Calu3 (cell line): ENCODE measurements at regions of chr13 and their contacts with region 1.

Region 1: GRCh38 chr13:53079691-53080090 is 51.1 kb downstream of the OLFM4 start:
- DNase-seq: no peak
- H3K4me3 Mint-ChIP-seq: no peak overlapping the region
- H3K27ac Mint-ChIP-seq: no peak overlapping the region
- H3K4me1 Mint-ChIP-seq: no peaks in the 10 kb centered on the region
- H3K27me3 Mint-ChIP-seq: no peaks in the 10 kb centered on the region
- CTCF ChIP-seq: no peak

Region 2: DNA sequence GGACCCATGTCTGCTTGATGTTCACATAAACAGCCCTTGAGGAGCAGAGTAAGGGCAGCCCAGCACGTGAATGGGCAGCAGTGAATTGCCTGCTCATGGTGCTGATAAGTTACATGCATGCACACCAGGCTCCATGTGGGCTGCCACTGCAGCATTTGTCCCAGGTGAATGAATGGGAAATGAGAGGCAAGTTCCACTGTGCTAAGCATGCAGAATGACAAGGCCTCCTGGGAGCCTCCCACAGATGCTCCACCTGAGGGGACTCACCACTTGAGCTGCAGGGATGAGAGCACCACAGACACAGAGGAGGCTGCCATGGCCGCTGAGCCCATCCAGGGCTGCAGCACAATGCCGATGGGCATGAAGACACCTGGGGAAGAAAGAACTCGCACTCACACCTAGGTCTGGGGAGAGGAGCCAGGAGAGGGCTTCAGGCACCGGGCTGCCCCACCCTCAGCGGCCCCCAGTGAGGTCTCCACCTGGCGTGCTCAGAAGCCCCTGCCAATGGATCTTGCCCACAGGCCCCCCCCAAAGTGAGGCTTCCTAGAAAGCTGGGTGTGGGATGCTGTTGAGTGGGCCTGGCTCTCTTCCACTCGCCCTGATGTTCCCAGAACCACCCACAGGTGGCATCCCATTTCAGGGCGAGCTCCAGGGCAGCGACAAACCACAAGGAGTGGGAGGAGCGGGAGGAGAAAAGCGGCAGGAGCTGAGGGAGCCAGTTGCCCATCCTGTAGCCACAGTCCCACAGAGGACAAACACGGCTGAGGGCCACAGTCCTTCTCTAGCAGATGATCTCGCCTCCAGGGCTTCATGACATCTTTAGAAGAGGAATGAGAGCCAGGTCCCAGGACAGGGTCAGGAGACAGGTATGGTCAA is 1144.1 kb before region 1 on chr13:
- CTCF ChIA-PET with region 1: no interaction called
- intact Hi-C with region 1: no loop called
- DNase-seq: peak; percentile 21
- H3K4me3 Mint-ChIP-seq: no peak overlapping the region
- H3K27ac Mint-ChIP-seq: no peak overlapping the region
- H3K4me1 Mint-ChIP-seq: no peaks in the 10 kb centered on the region
- H3K27me3 Mint-ChIP-seq: no peaks in the 10 kb centered on the region
- CTCF ChIP-seq: no peak

Region 3: DNA sequence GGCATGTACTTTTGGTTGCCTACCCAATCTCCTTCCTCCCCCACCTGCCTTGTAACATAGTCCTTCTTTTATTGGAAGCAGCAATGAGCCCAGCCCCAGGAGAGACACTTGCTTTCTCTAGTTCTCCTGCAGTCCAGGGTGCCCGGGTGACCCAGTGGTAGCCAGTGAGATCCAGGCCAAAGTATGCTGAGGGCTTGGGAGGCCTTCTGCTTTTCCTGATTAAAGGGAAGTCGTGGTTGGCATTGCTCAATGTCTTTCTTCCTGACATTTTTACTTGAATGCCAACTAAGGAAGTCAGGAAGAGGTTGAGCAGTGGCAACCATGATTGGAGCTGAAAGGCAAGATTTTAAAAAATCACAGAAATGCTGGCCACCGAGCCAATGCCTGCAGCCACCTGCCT is 365.8 kb before region 1 on chr13:
- CTCF ChIA-PET with region 1: no interaction called
- intact Hi-C with region 1: loop called (anchors 5 kb)
- DNase-seq: no peak
- H3K4me3 Mint-ChIP-seq: no peak overlapping the region
- H3K27ac Mint-ChIP-seq: no peak overlapping the region
- H3K4me1 Mint-ChIP-seq: no peaks in the 10 kb centered on the region
- H3K27me3 Mint-ChIP-seq: no peaks in the 10 kb centered on the region
- CTCF ChIP-seq: no peak

Region 4: DNA sequence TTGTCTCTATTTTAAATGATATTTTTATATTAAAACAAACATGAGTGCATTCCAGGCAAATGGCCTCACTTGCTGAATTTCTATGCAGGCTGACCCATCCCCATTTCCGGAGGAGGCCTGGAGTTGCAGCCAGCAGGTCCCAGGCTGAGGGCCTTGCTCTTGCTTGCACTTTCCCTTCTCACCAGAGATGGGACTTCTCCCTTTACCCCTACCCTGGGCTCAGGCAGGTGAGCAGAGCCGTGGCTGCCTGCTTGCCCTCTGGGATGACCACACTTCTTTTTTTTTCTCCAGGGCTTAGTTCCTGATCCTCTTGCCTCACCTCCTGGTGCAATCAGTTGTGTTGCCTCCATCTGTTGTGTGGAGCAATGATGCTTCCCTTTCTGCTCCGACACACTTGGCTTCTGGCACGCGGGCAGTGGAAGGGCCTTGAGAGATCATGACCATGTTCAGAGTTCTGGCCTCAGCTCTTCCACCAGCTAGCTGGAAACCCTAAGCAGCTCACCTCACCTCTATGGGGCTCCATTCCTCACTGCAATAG is 62.2 kb before region 1 on chr13:
- CTCF ChIA-PET with region 1: no interaction called
- intact Hi-C with region 1: no loop called
- DNase-seq: no peak
- H3K4me3 Mint-ChIP-seq: no peak overlapping the region
- H3K27ac Mint-ChIP-seq: no peak overlapping the region
- H3K4me1 Mint-ChIP-seq: no peaks in the 10 kb centered on the region
- H3K27me3 Mint-ChIP-seq: no peaks in the 10 kb centered on the region
- CTCF ChIP-seq: no peak

Region 5: GRCh38 chr13:53112525-53112924 is 32.8 kb after region 1 on chr13:
- CTCF ChIA-PET with region 1: no interaction called
- intact Hi-C with region 1: no loop called
- DNase-seq: no peak
- H3K4me3 Mint-ChIP-seq: no peak overlapping the region
- H3K27ac Mint-ChIP-seq: no peak overlapping the region
- H3K4me1 Mint-ChIP-seq: no peaks in the 10 kb centered on the region
- H3K27me3 Mint-ChIP-seq: no peaks in the 10 kb centered on the region
- CTCF ChIP-seq: no peak